Caco-2 (cell line): ENCODE measurements at regions of chr3 and their contacts with region 1.

Region 1: DNA sequence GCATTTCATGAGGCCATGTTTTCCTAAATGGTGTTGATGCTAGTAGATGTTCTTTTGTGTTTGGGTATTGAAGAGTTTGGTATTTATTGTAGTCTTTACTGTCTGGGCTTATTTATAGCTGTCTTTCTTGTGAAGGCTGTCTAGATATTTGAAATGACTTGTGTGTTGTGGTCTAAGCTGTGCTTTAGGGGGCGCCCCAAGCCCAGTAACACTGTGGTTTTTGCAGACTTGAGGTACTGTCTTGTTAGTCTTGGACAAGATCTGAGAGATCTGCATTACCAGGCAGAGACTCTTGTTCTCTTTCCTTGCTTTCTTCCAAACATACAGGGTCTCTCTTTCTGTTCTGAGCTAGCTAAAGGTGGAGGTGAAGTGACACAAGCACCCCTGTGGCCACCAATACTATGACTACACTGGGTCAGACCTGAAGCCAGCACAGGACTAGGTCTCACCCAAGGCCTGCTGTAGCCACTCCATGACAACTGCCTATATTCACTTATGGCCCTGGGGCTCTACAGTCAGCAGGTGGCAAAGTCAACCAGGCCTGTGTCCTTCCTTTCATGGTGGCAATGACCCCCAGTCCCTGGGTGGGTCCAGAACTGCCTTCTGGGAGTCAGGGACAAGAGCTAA is 152.1 kb upstream of the TBC1D5 start:
- DNase-seq: peak; percentile 54 to 62
- H3K4me3 ChIP-seq: no peak overlapping the region
- H3K4me3 Mint-ChIP-seq: no peak overlapping the region
- H3K27ac Mint-ChIP-seq: peak overlapping the region; percentile 24
- H3K4me1 ChIP-seq: peaks cover 25% of the 10 kb centered on the region
- H3K4me1 Mint-ChIP-seq: peaks cover 22% of the 10 kb centered on the region
- H3K27me3 ChIP-seq: no peaks in the 10 kb centered on the region
- H3K27me3 Mint-ChIP-seq: no peaks in the 10 kb centered on the region
- CTCF ChIP-seq: peak; percentile 50 to 59

Region 2: DNA sequence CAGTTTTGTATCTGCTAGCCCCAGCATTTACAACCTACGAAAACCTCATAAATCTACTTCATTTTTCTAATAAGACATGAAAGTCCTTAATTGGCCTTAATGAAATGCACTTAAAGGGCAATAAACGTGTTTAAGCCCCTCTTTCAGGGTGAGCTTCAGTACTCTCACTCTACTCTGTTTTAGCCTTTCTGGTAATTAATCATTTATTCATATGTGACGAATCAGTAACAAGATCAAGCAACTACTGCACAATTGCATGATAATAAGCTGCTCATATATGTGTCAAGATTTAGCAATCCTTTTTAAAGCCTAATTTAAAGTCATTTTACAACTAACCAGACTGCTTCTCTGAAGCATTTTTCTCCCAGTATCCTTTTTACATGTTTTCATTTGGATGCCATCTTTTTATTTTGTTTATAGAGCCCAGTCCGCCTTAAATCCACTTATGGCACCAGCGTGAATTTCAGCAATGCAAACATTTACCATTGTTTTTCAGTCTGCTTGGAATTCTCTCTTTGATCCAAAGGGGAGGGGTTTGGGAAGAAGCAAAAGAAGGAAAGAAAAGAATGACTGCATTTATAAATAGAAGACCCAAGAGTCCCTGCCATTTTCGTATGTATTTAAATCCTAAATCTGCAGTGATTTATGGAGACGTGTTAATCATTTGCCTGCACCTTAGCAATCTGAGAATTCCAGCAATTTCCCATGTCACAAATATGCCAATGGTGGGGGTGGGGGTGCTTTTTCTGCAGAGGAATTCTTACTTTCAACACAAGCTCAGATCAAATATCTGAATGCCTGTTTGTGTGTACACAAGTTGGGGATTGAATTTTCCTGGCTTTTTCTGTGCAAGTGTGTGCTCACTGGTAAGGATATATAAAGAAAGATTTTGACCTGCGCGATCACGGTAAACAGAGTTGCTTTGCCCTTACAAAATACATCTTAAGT is 78.7 kb after region 1 on chr3:
- CTCF ChIA-PET with region 1: interaction called, 4 read pairs
- POLR2A ChIA-PET with region 1: no interaction called
- intact Hi-C with region 1: loop called (anchors 2 kb)
- DNase-seq: peak; percentile 75 to 80
- H3K4me3 ChIP-seq: peak overlapping the region; percentile 2; the same call in 1 of the 2 replicates
- H3K4me3 Mint-ChIP-seq: peak overlapping the region; percentile 52
- H3K27ac Mint-ChIP-seq: peak overlapping the region; percentile 56
- H3K4me1 ChIP-seq: peaks cover 32% of the 10 kb centered on the region
- H3K4me1 Mint-ChIP-seq: peaks cover 26% of the 10 kb centered on the region
- H3K27me3 ChIP-seq: no peaks in the 10 kb centered on the region
- H3K27me3 Mint-ChIP-seq: no peaks in the 10 kb centered on the region
- CTCF ChIP-seq: no peak

Region 3: GRCh38 chr3:18153571-18154173 is 259.1 kb after region 1 on chr3:
- CTCF ChIA-PET with region 1: no interaction called
- POLR2A ChIA-PET with region 1: no interaction called
- intact Hi-C with region 1: loop called (anchors 5 kb)
- DNase-seq: peak; percentile 59 to 70
- H3K4me3 ChIP-seq: no peak overlapping the region
- H3K4me3 Mint-ChIP-seq: peak overlapping the region; percentile 29
- H3K27ac Mint-ChIP-seq: peak overlapping the region; percentile 17
- H3K4me1 ChIP-seq: peaks cover 9% of the 10 kb centered on the region; the same call in 1 of the 2 replicates
- H3K4me1 Mint-ChIP-seq: peaks cover 14% of the 10 kb centered on the region
- H3K27me3 ChIP-seq: no peaks in the 10 kb centered on the region
- H3K27me3 Mint-ChIP-seq: no peaks in the 10 kb centered on the region
- CTCF ChIP-seq: no peak

Region 4: DNA sequence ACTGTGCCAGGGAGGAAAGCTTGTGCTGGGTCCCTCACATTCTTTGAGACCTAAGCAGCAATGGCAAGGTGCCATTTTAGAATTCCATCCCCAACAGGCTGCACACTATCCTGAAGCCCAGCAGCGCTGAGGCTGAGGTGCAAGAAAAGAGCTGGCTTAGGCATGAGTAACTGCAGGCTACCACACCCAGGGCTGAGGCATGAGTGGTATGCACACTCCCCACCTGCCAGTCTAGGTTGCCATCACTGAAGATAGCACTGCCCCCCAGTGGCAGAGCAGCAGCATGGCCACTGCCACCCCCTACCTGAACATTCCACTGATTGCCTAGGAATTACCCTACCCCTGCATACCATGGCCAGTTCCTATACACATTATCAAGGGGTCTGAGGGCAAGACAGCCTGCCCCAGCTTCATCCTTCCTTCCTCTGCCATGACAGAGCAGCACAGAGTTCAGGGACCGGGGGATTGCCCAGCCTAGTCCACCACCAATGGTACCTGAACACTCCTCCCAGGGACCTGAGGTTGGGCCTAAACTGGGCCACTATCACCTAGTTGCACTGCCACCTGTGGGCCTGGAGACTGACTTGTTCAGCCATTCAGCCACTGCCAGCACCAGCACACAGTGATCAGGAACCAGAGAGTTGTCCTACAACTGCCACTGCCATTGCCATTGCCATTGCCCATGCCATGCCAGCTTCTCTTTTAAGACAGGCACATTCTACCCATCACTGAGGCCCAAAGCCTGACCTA is 400.8 kb after region 1 on chr3:
- CTCF ChIA-PET with region 1: interaction called, 4 read pairs
- POLR2A ChIA-PET with region 1: no interaction called
- intact Hi-C with region 1: loop called (anchors 1 kb)
- DNase-seq: peak; percentile 82 to 84
- H3K4me3 ChIP-seq: no peak overlapping the region
- H3K4me3 Mint-ChIP-seq: no peak overlapping the region
- H3K27ac Mint-ChIP-seq: peak overlapping the region; percentile 80
- H3K4me1 ChIP-seq: peaks cover 8% of the 10 kb centered on the region
- H3K4me1 Mint-ChIP-seq: peaks cover 7% of the 10 kb centered on the region
- H3K27me3 ChIP-seq: no peaks in the 10 kb centered on the region
- H3K27me3 Mint-ChIP-seq: no peaks in the 10 kb centered on the region
- CTCF ChIP-seq: peak; percentile 64 to 70

Region 5: GRCh38 chr3:18389108-18389733 is 494.7 kb after region 1 on chr3:
- CTCF ChIA-PET with region 1: interaction called, 3 read pairs
- POLR2A ChIA-PET with region 1: no interaction called
- intact Hi-C with region 1: loop called (anchors 1 kb)
- DNase-seq: peak in 1 of 2 experiments; percentile 43
- H3K4me3 ChIP-seq: no peak overlapping the region
- H3K4me3 Mint-ChIP-seq: no peak overlapping the region
- H3K27ac Mint-ChIP-seq: no peak overlapping the region
- H3K4me1 ChIP-seq: 0 out of 2 replicates have a peak, but pooled peaks cover 3% of the 10 kb centered on the region
- H3K4me1 Mint-ChIP-seq: no peaks in the 10 kb centered on the region
- H3K27me3 ChIP-seq: no peaks in the 10 kb centered on the region
- H3K27me3 Mint-ChIP-seq: no peaks in the 10 kb centered on the region
- CTCF ChIP-seq: peak; percentile 48 to 58